ENCODE measurements at regions of chr19 and their contacts with region 1.

Region 1: DNA sequence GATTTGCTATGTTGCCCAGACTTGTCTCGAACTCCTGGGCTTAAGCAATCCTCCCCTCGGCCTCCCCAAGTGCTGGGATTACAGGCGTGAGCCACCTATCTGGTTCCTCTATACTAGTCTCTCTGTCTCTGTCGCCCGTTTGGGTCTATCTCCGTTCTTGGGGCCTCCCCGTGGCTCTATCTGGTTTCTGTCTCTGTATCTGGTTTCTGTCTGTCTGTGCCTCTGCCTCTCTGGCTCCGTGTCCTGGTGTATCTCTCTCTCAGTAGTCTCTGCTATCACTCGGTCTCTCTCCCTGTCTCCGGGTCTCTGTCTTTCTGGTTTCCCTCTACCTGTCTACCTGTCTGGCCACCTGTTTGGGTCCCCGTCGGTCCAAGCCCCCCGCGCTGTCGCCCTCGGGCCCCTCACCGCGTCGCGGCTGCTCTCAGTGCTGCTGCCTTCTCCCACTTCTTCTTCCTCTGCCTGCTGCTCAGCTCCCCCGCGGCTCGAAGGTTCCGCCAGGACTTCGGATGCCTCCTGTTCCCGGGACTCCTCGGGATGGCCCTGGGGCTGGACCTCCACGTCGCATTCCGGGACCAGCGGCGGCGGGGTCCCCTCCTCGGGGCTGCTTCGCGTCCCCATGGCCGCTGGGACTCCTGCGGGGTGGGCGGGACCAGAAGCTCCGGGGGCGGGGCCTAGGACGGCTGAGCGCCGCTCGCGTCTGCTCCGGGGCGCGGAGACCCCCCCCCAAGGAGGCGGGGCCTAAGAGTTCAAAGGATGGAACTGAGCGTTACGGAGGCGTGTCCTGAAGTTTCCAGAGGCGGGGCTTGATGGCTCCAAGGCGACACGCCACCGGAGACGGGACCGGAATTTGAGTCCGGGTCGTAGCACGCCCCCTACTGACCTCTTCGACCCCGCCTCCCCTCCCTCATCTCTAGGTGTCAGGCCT is 783 bp downstream of the PHLDB3 start:
- DNase-seq: peak; percentile 98 to 100 (median 99)
- ATAC-seq: peak; percentile 92
- H3K4me3 ChIP-seq: peak overlapping the region; percentile 91
- H3K4me3 Mint-ChIP-seq: peak overlapping the region; percentile 94
- H3K27ac ChIP-seq: peak overlapping the region; percentile 85 to 88
- H3K27ac Mint-ChIP-seq: peak overlapping the region; percentile 96
- H3K4me1 ChIP-seq: peaks cover 35% of the 10 kb centered on the region
- H3K4me1 Mint-ChIP-seq: peaks cover 40% of the 10 kb centered on the region
- H3K27me3 ChIP-seq: no peaks in the 10 kb centered on the region
- H3K27me3 Mint-ChIP-seq: no peaks in the 10 kb centered on the region
- CTCF ChIP-seq: no peak

Region 2: DNA sequence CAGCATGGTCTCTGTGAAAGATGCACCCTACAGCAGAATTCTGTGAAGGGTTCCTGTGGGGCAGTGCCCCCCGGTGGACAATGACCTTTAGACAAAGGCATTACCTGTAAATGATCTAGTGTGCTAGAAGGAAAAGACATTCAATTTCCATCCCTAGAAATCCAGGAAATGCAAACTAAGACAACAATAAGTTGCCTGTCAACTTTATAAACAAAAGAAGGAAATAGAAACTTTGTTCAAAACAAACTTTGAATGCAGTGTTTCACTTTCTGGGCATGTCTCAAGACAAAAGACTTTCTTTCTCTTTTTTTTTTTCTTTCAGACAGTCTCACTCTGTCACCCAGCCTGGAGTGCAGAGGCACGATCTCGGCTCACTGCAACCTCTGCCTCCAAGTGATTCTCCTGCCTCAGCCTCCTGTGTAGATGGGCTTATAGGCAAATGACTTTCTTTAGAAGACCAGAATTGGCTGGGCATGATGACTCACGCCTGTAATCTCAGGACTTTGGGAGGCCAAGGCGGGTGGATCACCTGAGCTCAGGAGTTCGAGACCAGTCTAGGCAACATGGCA is 73.5 kb before region 1 on chr19:
- CTCF ChIA-PET with region 1: interaction called, 14 read pairs
- POLR2A ChIA-PET with region 1: interaction called, 5 read pairs
- intact Hi-C with region 1: no loop called
- DNase-seq: peak in 2 of 14 experiments; percentile 45 to 56
- ATAC-seq: peak; percentile 79
- H3K4me3 ChIP-seq: no peak overlapping the region
- H3K4me3 Mint-ChIP-seq: peak overlapping the region; percentile 16
- H3K27ac ChIP-seq: peak overlapping the region in 1 of 2 donors; percentile 53
- H3K27ac Mint-ChIP-seq: peak overlapping the region; percentile 89
- H3K4me1 ChIP-seq: peaks cover 17% of the 10 kb centered on the region
- H3K4me1 Mint-ChIP-seq: peaks cover 39% of the 10 kb centered on the region
- H3K27me3 ChIP-seq: no peaks in the 10 kb centered on the region
- H3K27me3 Mint-ChIP-seq: no peaks in the 10 kb centered on the region
- CTCF ChIP-seq: no peak

Region 3: GRCh38 chr19:43446746-43447489 is 56.8 kb before region 1 on chr19:
- CTCF ChIA-PET with region 1: interaction called, 19 read pairs
- POLR2A ChIA-PET with region 1: interaction called, 17 read pairs
- intact Hi-C with region 1: loop called (anchors 1 to 5 kb)
- DNase-seq: peak; percentile 74 to 91 (median 79)
- ATAC-seq: peak; percentile 86
- H3K4me3 ChIP-seq: no peak overlapping the region
- H3K4me3 Mint-ChIP-seq: no peak overlapping the region
- H3K27ac ChIP-seq: no peak overlapping the region
- H3K27ac Mint-ChIP-seq: peak overlapping the region; percentile 81
- H3K4me1 ChIP-seq: peaks cover 19% of the 10 kb centered on the region
- H3K4me1 Mint-ChIP-seq: peaks cover 39% of the 10 kb centered on the region
- H3K27me3 ChIP-seq: no peaks in the 10 kb centered on the region
- H3K27me3 Mint-ChIP-seq: no peaks in the 10 kb centered on the region
- CTCF ChIP-seq: peak; percentile 97

Region 4: GRCh38 chr19:43481701-43482100 is 22.1 kb before region 1 on chr19:
- CTCF ChIA-PET with region 1: interaction called, 4 read pairs
- POLR2A ChIA-PET with region 1: interaction called, 3 read pairs
- intact Hi-C with region 1: loop called in 1 of 2 experiments (anchors 2 kb)
- DNase-seq: no peak
- ATAC-seq: no peak
- H3K4me3 ChIP-seq: no peak overlapping the region
- H3K4me3 Mint-ChIP-seq: no peak overlapping the region
- H3K27ac ChIP-seq: no peak overlapping the region
- H3K27ac Mint-ChIP-seq: peak overlapping the region; percentile 33
- H3K4me1 ChIP-seq: no peaks in the 10 kb centered on the region
- H3K4me1 Mint-ChIP-seq: no peaks in the 10 kb centered on the region
- H3K27me3 ChIP-seq: no peaks in the 10 kb centered on the region
- H3K27me3 Mint-ChIP-seq: no peaks in the 10 kb centered on the region
- CTCF ChIP-seq: no peak

Region 5: DNA sequence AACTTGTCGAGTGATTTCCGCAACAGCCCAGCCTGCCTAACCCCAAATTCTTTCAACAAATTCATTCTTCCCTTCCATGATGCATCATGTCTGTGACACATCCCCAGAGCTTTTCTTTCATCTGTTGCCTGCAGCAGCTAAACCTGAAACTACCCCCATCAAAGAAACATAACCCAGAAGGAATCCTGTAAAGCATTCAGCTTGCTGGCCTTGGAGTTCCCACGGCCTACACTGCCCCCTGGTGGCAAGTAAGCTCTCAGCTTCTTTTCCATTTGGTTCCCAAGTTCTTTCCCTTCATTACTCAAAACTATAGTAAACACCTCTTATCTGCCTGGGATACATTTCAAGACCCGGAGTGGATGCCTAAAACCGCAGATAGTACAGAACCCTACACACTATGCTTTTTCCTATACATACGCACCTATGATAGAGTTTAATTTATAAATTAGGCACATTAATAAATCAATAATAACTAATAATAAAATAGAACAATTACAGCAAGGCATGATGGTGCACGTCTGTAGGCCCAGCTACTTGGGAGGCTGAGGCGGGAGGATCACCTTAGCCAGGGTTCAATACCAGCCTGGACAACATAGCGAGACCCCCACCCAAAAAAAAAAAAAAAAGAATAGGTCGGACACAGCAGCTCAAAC is 15.8 kb after region 1 on chr19:
- CTCF ChIA-PET with region 1: interaction called, 10 read pairs
- POLR2A ChIA-PET with region 1: interaction called, 23 read pairs
- intact Hi-C with region 1: loop called in 1 of 2 experiments (anchors 2 kb)
- DNase-seq: peak; percentile 71 to 91 (median 78)
- ATAC-seq: peak; percentile 99
- H3K4me3 ChIP-seq: no peak overlapping the region
- H3K4me3 Mint-ChIP-seq: no peak overlapping the region
- H3K27ac ChIP-seq: no peak overlapping the region
- H3K27ac Mint-ChIP-seq: peak overlapping the region; percentile 25
- H3K4me1 ChIP-seq: peaks cover 10% of the 10 kb centered on the region
- H3K4me1 Mint-ChIP-seq: peaks cover 11% of the 10 kb centered on the region
- H3K27me3 ChIP-seq: no peaks in the 10 kb centered on the region
- H3K27me3 Mint-ChIP-seq: no peaks in the 10 kb centered on the region
- CTCF ChIP-seq: peak; percentile 92

Region 6: DNA sequence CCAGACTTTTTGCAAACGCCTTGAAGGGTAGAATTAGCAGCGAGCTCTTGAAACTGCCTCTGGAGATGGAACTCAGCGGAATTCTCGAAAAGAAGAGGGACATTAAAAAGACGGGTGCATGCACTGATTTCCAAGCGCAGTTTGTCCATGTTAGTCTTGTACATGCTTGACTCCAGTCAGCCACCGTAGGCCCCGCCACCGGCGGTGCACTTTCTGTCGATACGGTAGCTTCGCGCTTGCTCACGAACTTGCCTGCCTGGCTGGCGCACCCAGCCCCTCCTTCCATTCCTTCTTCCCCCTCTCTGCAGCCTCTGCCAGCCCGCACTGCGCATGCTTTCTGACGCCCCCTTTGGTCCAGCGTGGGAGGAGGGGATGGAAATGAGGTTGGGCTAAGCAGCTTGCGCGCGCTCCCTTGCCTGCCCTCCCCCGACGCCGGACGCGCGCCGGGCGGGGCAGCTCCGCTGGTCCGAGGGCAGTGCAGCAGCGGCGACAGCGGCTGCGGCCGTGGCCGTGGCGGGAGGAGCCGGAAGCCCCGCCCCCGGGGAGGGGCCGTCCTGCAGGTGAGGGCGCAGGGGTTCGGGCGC is 29.3 kb after region 1 on chr19 and contains the start of gene ZNF575:
- CTCF ChIA-PET with region 1: no interaction called
- POLR2A ChIA-PET with region 1: interaction called, 17 read pairs
- intact Hi-C with region 1: no loop called
- DNase-seq: peak; percentile 70 to 93 (median 81)
- ATAC-seq: peak; percentile 48
- H3K4me3 ChIP-seq: peak within 1 kb of the TSS; percentile 77
- H3K4me3 Mint-ChIP-seq: peak within 1 kb of the TSS; percentile 96
- H3K27ac ChIP-seq: peak within 1 kb of the TSS; percentile 53 to 61
- H3K27ac Mint-ChIP-seq: peak within 1 kb of the TSS; percentile 92
- H3K4me1 ChIP-seq: peaks cover 21% of the 10 kb centered on the region
- H3K4me1 Mint-ChIP-seq: peaks cover 21% of the 10 kb centered on the region
- H3K27me3 ChIP-seq: no peaks in the 10 kb centered on the region
- H3K27me3 Mint-ChIP-seq: no peaks in the 10 kb centered on the region
- CTCF ChIP-seq: peak; percentile 13
- total RNA-seq, gene ZNF575: 2.6 to 2.7 TPM

Measured in CD4-positive, alpha-beta T cell (primary cell).